ENCODE measurements at regions of chr12 and their contacts with region 1.

Region 1: DNA sequence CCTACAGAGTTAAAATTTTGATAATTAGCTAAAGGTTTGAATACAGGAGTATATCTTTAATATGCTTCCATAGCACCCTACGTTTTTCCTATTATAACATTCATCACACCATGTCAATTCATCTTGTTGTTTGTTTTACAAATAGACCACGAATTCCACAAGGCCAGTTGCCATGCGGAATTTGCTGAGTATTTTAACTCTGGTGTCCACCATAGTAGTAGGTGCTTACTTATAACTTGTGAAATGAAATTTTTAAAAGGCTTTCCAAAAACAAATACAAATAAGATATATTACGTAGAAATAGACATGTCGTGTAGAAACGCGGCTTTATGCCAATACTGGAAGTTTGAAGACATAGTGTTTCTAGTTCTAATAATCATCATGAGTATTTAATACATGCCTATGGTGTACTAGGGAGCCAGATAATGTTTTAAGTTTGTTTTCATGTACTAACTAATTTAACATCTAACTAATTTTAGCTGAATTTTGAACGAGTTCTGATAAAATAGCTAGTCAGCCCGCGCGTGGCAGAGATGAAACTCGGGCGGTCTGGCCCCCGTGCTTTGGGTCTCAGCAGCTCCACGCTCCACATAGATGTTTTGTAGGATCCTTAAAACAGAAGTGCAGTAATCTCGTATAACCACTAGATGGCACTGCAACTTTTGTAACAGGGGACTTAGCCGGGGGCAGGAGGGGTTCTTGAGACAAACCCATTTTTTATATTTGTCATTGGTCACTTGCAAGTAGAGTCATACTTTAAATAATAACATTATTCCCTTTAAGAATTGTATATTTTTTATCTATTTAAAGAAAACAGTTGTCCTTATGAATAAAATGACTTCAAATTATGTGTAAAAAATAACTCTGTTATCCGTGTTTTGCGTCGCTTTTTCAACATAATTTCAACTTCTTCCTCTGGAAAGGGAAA is 10.2 kb downstream of the CD69 start:
- DNase-seq: peak; percentile 70 to 87
- H3K4me3 ChIP-seq: no peak overlapping the region
- H3K4me1 ChIP-seq: peaks cover 39% of the 10 kb centered on the region
- H3K27me3 ChIP-seq: no peaks in the 10 kb centered on the region

Region 2: DNA sequence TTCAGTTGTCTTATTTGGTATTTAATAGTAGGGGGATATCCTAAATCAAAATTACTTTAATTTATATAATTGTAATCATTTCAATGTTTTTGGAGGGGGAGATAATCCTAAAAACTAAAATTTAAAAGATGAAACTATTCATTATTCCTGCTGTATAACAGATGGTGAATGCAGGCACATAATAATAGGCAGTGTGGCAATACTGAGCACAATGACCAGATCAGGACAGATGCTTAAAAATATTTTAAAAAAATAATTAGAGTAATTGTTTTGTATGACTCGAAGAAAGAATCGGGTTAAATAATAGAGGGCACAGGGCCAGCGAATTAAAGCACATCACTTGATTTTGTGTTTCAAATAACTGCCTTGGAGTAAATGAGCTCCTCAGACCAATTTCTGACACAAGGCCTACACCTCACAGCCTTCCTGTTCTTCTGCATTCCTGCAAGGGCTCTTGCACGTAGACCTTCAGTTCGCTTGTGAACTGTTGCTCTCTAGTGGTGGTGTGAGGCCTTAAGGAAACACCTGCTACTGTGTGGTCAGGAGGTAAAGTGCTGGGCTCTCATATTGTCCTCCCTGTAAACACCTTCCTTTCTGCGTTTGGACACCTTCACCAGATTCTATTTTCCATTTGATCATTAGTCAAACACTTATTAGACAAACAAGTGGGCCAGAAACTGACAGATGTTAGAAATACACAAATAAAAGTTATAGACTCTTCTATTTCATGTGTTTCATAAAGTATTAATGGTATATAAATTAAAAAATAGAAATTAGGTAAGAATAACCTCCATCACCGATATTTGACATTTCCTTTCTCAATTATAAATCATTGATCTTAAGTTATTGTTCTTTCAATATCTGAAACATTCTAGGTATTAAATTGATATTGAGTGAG is 47.4 kb after region 1 on chr12:
- in situ Hi-C with region 1: loop called (anchors 5 kb)
- DNase-seq: peak; percentile 79 to 92
- H3K4me3 ChIP-seq: no peak overlapping the region
- H3K4me1 ChIP-seq: peaks cover 26% of the 10 kb centered on the region
- H3K27me3 ChIP-seq: no peaks in the 10 kb centered on the region